Activated naive CD4-positive, alpha-beta T cell treated with anti-CD3 and anti-CD28 coated beads for 36 hours (primary cell): ENCODE measurements at regions of chr7 and their contacts with region 1.

Region 1: GRCh38 chr7:32846701-32847100 is 44.9 kb downstream of the KBTBD2 start:
- DNase-seq: peak; percentile 96
- H3K4me3 Mint-ChIP-seq: no peak overlapping the region
- H3K27ac Mint-ChIP-seq: no peak overlapping the region
- H3K4me1 Mint-ChIP-seq: peaks cover 6% of the 10 kb centered on the region
- H3K27me3 Mint-ChIP-seq: peaks cover 12% of the 10 kb centered on the region

Region 2: DNA sequence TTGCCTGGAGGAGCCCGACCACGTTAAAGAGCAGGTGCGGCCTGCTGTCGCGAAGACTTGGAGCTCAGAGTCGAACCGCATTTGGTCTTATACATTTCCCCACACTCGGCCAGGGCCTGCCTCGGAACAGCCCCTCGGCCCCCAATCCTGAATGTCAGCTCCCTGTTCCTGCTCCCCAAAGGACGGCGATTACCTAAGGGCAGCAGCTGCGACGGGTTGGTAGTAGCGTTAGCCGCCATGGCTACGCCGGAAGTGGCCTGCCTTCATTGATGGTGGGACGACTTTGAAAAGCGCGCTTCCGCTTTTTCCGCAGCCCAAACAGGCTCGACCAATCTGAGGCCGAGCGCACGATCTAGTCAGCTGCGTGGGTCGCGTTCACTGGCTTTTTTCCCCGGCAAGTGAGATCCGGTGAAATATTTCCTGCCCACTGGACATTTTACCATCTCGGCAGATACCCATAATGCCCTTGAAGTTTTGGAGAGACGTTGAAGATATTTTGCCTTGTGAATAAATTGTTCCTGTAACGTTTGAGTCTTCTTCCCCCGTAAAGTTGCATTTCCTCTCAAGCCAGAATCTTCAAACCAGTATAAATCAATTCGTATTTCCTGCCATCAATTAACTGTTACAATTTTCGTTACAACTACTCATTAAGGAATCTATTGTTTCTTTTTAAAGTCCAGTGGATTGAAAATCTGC is 356.4 kb before region 1 on chr7 and contains the start of gene LSM5:
- CTCF ChIA-PET with region 1: no interaction called
- intact Hi-C with region 1: loop called (anchors 5 kb)
- DNase-seq: peak; percentile 94
- H3K4me3 Mint-ChIP-seq: peak within 1 kb of the TSS; percentile 86
- H3K27ac Mint-ChIP-seq: peak within 1 kb of the TSS; percentile 95
- H3K4me1 Mint-ChIP-seq: peaks cover 27% of the 10 kb centered on the region
- H3K27me3 Mint-ChIP-seq: no peaks in the 10 kb centered on the region
- total RNA-seq, gene LSM5: 132 to 141 TPM

Region 3: GRCh38 chr7:32858648-32859047 is 11.9 kb after region 1 on chr7:
- CTCF ChIA-PET with region 1: interaction called, 19 read pairs
- intact Hi-C with region 1: no loop called
- DNase-seq: no peak
- H3K4me3 Mint-ChIP-seq: no peak overlapping the region
- H3K27ac Mint-ChIP-seq: no peak overlapping the region
- H3K4me1 Mint-ChIP-seq: peaks cover 13% of the 10 kb centered on the region
- H3K27me3 Mint-ChIP-seq: peaks cover 16% of the 10 kb centered on the region

Region 4: GRCh38 chr7:32879460-32879859 is 32.8 kb after region 1 on chr7:
- CTCF ChIA-PET with region 1: interaction called, 11 read pairs
- intact Hi-C with region 1: no loop called
- DNase-seq: no peak
- H3K4me3 Mint-ChIP-seq: no peak overlapping the region
- H3K27ac Mint-ChIP-seq: peak overlapping the region; percentile 59
- H3K4me1 Mint-ChIP-seq: peaks cover 50% of the 10 kb centered on the region
- H3K27me3 Mint-ChIP-seq: no peaks in the 10 kb centered on the region

Region 5: DNA sequence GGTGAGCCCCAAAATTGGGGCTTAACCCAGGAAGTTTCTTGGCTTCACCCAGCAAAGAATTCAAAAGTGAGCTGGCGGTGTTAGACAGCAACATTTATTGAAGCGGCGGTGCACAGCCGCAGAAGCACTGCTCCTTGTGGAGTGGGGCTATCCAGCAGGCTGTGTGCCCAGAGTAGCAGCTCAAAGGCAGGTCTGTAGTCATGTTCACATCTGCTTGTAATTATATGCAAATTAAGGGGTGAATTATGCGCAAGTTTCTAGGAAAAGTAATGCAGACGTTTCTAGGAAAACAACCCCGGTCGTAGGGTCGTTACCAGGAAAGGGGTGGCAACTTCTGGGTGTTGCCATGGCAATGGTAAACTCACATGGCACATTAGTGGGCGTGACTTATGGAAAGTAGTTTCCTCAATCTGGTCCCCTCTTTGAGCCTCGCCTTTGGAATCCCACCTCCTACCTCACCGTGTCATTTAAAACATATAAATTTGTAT is 58.5 kb after region 1 on chr7:
- CTCF ChIA-PET with region 1: interaction called, 16 read pairs
- intact Hi-C with region 1: loop called (anchors 1 kb)
- DNase-seq: peak; percentile 88
- H3K4me3 Mint-ChIP-seq: peak overlapping the region; percentile 70
- H3K27ac Mint-ChIP-seq: peak overlapping the region; percentile 87
- H3K4me1 Mint-ChIP-seq: peaks cover 18% of the 10 kb centered on the region
- H3K27me3 Mint-ChIP-seq: no peaks in the 10 kb centered on the region

Region 6: DNA sequence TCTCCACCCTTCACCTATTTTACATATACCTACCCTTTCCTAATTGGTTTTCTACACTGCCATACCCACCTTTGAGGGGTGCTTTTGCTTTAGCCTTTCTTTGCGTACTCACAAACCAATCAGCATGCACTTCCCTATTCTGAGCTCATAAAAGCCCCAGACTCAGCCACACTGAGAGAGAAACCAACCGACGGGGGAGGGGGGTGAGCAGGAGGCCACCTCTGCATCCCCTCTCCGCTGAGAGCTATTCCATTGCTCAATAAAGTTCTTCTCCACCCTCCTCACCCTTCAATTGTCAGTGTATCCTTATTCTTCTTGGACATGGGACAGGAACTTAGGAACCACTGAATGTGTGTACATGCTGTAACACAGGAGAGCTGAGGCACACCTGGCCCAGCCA is 101.5 kb after region 1 on chr7:
- CTCF ChIA-PET with region 1: interaction called, 125 read pairs
- intact Hi-C with region 1: loop called (anchors 1 kb)
- DNase-seq: no peak
- H3K4me3 Mint-ChIP-seq: no peak overlapping the region
- H3K27ac Mint-ChIP-seq: no peak overlapping the region
- H3K4me1 Mint-ChIP-seq: no peaks in the 10 kb centered on the region
- H3K27me3 Mint-ChIP-seq: no peaks in the 10 kb centered on the region

Region 7: GRCh38 chr7:33050535-33051318 is 204.0 kb after region 1 on chr7:
- CTCF ChIA-PET with region 1: interaction called, 11 read pairs
- intact Hi-C with region 1: loop called (anchors 1 kb)
- DNase-seq: peak; percentile 38
- H3K4me3 Mint-ChIP-seq: no peak overlapping the region
- H3K27ac Mint-ChIP-seq: no peak overlapping the region
- H3K4me1 Mint-ChIP-seq: peaks cover 54% of the 10 kb centered on the region
- H3K27me3 Mint-ChIP-seq: no peaks in the 10 kb centered on the region